ENCODE measurements at regions of chr20 and their contacts with region 1.

Region 1: GRCh38 chr20:32697608-32698007 is 23.9 kb upstream of the C20orf203 start:
- DNase-seq: no peak
- H3K4me3 ChIP-seq: no peak overlapping the region
- H3K27ac ChIP-seq: no peak overlapping the region
- H3K27me3 ChIP-seq: no peaks in the 10 kb centered on the region
- CTCF ChIP-seq: no peak

Region 2: GRCh38 chr20:32343438-32343837 is 354.2 kb before region 1 on chr20:
- CTCF ChIA-PET with region 1: interaction called, 10 read pairs
- POLR2A ChIA-PET with region 1: no interaction called
- DNase-seq: no peak
- H3K4me3 ChIP-seq: no peak overlapping the region
- H3K27ac ChIP-seq: no peak overlapping the region
- H3K27me3 ChIP-seq: no peaks in the 10 kb centered on the region
- CTCF ChIP-seq: no peak

Region 3: GRCh38 chr20:32664678-32665159 is 32.9 kb before region 1 on chr20:
- CTCF ChIA-PET with region 1: no interaction called
- POLR2A ChIA-PET with region 1: no interaction called
- DNase-seq: no peak
- H3K4me3 ChIP-seq: no peak overlapping the region
- H3K27ac ChIP-seq: no peak overlapping the region
- H3K27me3 ChIP-seq: no peaks in the 10 kb centered on the region
- CTCF ChIP-seq: no peak

Measured in AG04450 (cell line).